ENCODE measurements at regions of chr1 and their contacts with region 1.

Region 1: GRCh38 chr1:40691538-40692428 is at the start of gene NFYC:
- DNase-seq: peak; percentile 98
- ATAC-seq: peak; percentile 89
- H3K4me3 Mint-ChIP-seq: peak within 1 kb of the TSS; percentile 87
- H3K27ac Mint-ChIP-seq: peak within 1 kb of the TSS; percentile 93
- H3K4me1 Mint-ChIP-seq: peaks cover 52% of the 10 kb centered on the region
- H3K27me3 Mint-ChIP-seq: no peaks in the 10 kb centered on the region
- total RNA-seq, gene NFYC: 71.5 to 74.4 TPM

Region 2: GRCh38 chr1:40385437-40386358 is 306.1 kb before region 1 on chr1:
- CTCF ChIA-PET with region 1: no interaction called
- POLR2A ChIA-PET with region 1: interaction called, 10 read pairs
- DNase-seq: peak; percentile 84
- ATAC-seq: peak; percentile 68
- H3K4me3 Mint-ChIP-seq: peak overlapping the region; percentile 79
- H3K27ac Mint-ChIP-seq: peak overlapping the region; percentile 99
- H3K4me1 Mint-ChIP-seq: peaks cover 94% of the 10 kb centered on the region
- H3K27me3 Mint-ChIP-seq: no peaks in the 10 kb centered on the region

Region 3: DNA sequence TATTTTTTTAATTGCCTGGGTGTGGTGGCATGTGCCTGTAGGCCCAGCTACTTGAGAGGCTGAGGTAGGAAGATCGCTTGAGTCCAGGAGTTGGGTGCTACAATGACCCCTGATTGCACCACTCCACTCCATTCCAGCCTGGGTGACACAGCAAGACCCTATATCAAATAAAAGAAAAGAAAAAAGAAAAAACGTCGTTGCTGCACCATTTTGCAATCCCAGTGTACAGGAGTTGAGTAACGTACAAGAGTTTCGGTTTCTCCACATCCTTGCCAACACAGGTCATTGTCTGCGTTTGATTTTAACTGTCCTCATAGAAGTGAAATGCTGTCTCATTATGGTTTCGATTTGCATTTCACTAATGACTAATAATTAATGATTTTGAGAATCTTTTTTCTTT is 152.4 kb before region 1 on chr1:
- CTCF ChIA-PET with region 1: no interaction called
- POLR2A ChIA-PET with region 1: no interaction called
- DNase-seq: no peak
- ATAC-seq: no peak
- H3K4me3 Mint-ChIP-seq: no peak overlapping the region
- H3K27ac Mint-ChIP-seq: no peak overlapping the region
- H3K4me1 Mint-ChIP-seq: no peaks in the 10 kb centered on the region
- H3K27me3 Mint-ChIP-seq: no peaks in the 10 kb centered on the region

Region 4: GRCh38 chr1:40668769-40669525 is 22.8 kb before region 1 on chr1:
- CTCF ChIA-PET with region 1: interaction called, 24 read pairs
- POLR2A ChIA-PET with region 1: interaction called, 12 read pairs
- DNase-seq: peak; percentile 90
- ATAC-seq: peak; percentile 59
- H3K4me3 Mint-ChIP-seq: peak overlapping the region; percentile 36
- H3K27ac Mint-ChIP-seq: no peak overlapping the region
- H3K4me1 Mint-ChIP-seq: peaks cover 16% of the 10 kb centered on the region
- H3K27me3 Mint-ChIP-seq: peaks cover 12% of the 10 kb centered on the region

Region 5: GRCh38 chr1:40709100-40709801 is 17.5 kb after region 1 on chr1:
- CTCF ChIA-PET with region 1: interaction called, 41 read pairs
- POLR2A ChIA-PET with region 1: interaction called, 66 read pairs
- DNase-seq: peak; percentile 91
- ATAC-seq: peak; percentile 98
- H3K4me3 Mint-ChIP-seq: peak overlapping the region; percentile 98
- H3K27ac Mint-ChIP-seq: peak overlapping the region; percentile 98
- H3K4me1 Mint-ChIP-seq: peaks cover 61% of the 10 kb centered on the region
- H3K27me3 Mint-ChIP-seq: no peaks in the 10 kb centered on the region

Region 6: DNA sequence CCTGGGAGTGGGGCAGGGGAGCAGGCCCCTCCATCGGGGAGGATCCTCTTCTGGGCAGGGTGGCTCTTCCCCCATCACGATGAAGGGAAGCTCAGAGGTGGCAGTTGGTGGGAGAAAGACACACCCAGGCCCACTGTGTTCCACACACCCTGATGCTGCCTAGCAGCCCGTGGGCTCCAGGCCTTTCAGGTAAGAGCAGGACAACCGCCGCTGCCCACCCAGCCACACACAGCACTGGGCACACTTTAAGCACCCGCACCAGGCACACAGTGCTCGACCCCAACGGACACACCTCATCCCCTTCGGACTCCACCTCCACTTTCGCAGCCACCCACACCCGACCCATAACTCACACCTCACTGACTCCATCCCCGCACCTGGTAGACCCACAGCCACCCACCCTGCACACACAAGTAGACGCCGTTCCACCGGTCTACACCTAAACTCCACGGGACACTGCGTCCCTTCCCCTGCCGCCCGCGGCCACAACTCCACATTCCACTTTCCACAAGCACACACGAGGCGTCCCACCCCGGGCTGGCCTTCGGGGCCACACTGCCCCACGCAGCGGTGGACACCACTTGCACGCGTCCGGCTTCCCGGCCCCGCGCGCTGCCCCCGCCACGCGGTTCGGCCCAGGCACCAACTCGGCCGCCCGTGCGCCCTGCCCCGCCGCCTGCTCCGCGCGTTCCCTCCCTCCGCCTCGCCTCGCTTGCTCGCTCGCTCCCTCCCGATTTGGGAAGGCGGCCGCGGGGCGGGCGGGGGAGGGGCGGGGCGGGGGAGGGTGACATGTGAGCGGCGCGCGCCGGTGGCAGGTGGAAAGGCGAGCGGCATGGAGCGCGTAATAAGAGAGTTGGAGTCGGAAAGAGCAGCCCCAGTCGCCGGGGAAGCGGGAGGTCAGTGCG is 91.5 kb after region 1 on chr1 and contains the start of gene KCNQ4:
- CTCF ChIA-PET with region 1: no interaction called
- POLR2A ChIA-PET with region 1: no interaction called
- DNase-seq: no peak
- ATAC-seq: peak; percentile 28
- H3K4me3 Mint-ChIP-seq: peak within 1 kb of the TSS; percentile 41
- H3K27ac Mint-ChIP-seq: no peak within 1 kb of the TSS
- H3K4me1 Mint-ChIP-seq: peaks cover 33% of the 10 kb centered on the region
- H3K27me3 Mint-ChIP-seq: peaks cover 27% of the 10 kb centered on the region
- total RNA-seq, gene KCNQ4: 0.73 to 0.87 TPM

Region 7: DNA sequence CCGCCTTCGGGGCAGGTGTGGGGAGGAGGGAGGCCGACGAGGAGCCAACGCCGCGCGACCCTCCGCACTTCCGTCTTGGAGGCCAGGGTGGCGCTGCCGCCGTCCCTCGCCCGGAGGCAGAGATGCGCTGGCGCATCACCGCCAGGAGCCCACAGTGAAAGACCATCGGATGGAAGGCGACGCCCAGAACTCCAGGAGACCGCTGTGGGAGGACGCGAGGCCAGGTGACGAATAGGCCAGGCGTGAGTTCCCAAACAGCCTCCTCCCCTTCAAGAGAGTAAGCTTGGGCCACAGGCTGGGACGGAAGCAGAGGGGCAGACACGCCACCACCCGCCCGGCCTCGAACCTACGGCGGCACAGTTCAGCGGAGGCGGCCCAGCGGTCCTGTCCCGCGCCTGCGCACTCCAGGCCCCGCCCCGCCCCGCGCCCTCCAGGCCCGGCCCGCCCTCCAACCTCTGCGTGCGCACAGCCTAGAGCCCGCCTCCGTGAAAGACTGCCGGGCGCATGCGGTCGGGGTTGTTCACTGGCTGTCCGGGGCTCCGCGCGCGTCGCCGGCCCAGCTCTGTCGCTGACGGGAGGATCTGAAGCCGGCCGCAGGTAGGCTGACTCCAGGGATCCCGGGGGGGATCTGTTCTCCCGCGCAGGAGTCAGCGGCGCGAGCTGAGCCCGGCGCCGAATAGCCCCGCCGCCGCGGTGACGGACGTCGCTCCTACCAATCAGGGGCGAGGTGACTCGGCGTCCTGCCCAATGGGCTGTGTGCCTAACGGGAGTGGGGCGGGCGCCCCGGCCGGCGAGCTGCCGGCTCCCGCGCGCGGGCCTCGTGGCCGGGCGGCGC is 287.7 kb after region 1 on chr1 and contains the start of gene CTPS1:
- CTCF ChIA-PET with region 1: no interaction called
- POLR2A ChIA-PET with region 1: interaction called, 15 read pairs
- DNase-seq: peak; percentile 96
- ATAC-seq: peak; percentile 93
- H3K4me3 Mint-ChIP-seq: peak within 1 kb of the TSS; percentile 87
- H3K27ac Mint-ChIP-seq: peak within 1 kb of the TSS; percentile 95
- H3K4me1 Mint-ChIP-seq: peaks cover 48% of the 10 kb centered on the region
- H3K27me3 Mint-ChIP-seq: no peaks in the 10 kb centered on the region
- total RNA-seq, gene CTPS1: 72.6 to 74.5 TPM

Measured in activated CD8-positive, alpha-beta T cell treated with anti-CD3 and anti-CD28 coated beads, Interleukin-2, amount 10 ng/mL, durations not matched to agents 7 days and 5 days (primary cell).